Right ventricle myocardium inferior (tissue), 1 donor: ENCODE measurements at regions of chr11 and their contacts with region 1.

Region 1: GRCh38 chr11:46616998-46617675 is at the starts of genes ATG13 and HARBI1:
- DNase-seq: peak; percentile 95
- ATAC-seq: peak; percentile 99
- total RNA-seq, gene ATG13: 39.4 TPM
- total RNA-seq, gene HARBI1: 3.5 TPM

Region 2: GRCh38 chr11:46492532-46492931 is 124.6 kb before region 1 on chr11:
- intact Hi-C with region 1: no loop called
- DNase-seq: no peak
- ATAC-seq: peak; percentile 85

Region 3: GRCh38 chr11:46574656-46575055 is 42.5 kb before region 1 on chr11:
- intact Hi-C with region 1: no loop called
- DNase-seq: no peak
- ATAC-seq: no peak

Region 4: DNA sequence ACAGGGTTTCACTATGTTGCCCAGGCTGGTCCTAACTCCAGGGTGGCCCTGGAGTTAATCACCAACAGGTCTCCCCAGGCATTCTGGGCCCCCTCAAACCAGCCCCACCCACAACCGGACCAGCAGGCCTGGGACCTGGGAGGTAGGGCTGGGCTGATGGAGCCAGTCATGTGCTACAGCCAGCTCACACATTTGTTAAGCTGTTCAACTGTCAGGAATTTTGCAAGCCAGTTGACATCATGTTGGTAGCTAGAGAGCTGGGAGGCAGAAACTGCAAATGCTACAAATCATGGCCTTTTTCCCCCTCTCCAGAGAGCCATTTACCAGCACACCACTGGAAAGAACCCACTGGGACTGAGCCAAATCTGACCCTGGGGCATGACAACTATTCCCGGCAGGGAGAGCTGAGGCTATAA is 76.5 kb after region 1 on chr11:
- intact Hi-C with region 1: loop called (anchors 10 kb)
- DNase-seq: no peak
- ATAC-seq: no peak

Region 5: DNA sequence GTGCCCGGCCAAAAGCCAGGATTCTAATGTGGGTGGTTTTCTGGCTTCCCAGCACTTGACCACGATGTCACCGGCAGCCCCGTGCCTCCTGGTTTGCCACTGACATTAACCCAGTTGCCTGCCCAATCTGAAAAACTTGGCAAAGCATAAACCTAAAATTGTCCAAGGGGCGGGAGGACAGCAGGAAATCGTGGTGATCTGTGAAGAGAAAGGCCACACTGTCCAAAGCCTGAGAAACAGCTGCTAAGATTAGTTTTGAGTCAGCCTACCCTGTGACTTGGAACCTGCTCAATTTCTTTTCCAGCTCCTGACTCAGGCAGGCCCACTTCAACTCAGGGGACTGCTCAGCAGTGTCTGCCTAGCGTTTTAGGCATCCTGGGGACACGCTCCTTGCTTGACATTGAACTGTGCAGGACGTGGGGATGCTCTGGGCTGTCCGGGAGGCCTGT is 93.7 kb after region 1 on chr11:
- intact Hi-C with region 1: loop called (anchors 5 kb)
- DNase-seq: no peak
- ATAC-seq: peak; percentile 98

Region 6: GRCh38 chr11:47035108-47035507 is 418.0 kb after region 1 on chr11:
- intact Hi-C with region 1: no loop called
- DNase-seq: no peak
- ATAC-seq: no peak